KBM-7 (cell line): ENCODE measurements at regions of chr12 and their contacts with region 1.

Region 1: DNA sequence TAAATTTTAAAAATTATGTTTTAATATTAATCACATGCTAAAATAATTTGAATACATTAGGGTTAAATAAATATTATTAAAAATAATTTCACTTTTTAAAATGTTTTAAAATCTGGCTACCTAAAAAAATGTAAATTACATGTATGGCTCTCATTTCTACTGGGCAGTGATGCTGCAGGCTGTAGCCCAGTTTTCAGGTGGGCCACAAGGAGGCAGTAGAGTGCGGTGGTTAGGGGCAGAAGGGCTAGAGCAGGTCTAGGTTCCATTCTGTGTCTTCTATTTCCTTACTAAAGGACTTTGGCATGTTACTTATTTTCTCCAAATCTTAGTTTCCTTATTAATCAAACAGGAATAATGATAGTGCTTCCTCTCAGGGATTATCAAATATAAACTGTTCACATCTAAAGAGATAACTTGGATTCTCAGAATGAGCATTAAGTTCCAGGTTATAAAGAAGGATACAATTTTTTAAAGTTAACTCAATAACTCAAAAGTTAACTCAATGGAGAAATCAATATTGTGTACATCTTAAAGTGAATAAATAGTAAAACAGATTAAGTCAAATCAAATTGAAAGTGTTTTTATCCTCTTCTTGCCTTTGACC is 54.9 kb upstream of the OVCH1 start:
- DNase-seq: peak; percentile 60

Region 2: GRCh38 chr12:30847259-30847658 is 1294.8 kb after region 1 on chr12:
- in situ Hi-C with region 1: loop called (anchors 25 kb)
- DNase-seq: peak; percentile 59